Common myeloid progenitor, CD34-positive (primary cell): ENCODE measurements at regions of chr5 and their contacts with region 1.

Region 1: DNA sequence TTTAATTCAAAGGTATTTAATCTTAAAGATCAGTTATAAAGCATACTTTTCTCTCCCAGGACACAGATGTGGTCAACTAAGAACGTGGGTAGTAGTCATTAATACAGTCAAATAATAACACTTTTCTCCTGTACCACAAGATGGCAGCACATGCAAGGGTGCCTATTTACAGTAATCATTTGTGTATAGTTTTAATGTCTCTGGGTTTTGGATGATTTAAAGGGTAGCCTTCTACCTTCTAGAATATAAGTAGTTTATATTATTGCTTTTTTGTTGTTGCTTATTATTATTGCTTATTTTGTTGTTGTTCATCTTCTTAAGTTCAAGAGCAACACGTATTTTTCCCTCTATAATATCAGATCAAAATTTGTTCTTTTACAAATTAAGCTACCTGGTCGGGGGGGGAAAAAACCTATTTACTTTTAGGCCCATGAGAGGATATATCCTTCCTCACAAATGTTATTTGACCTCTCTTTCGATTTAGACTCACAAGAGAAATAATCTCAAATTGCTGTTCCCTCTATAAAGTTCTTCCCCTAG is 59.6 kb upstream of the SLC27A6 start:
- DNase-seq: peak; percentile 72 to 90 (median 83)
- H3K4me3 ChIP-seq: no peak overlapping the region
- H3K27ac ChIP-seq: no peak overlapping the region
- H3K4me1 ChIP-seq: no peaks in the 10 kb centered on the region
- H3K27me3 ChIP-seq: no peaks in the 10 kb centered on the region

Region 2: DNA sequence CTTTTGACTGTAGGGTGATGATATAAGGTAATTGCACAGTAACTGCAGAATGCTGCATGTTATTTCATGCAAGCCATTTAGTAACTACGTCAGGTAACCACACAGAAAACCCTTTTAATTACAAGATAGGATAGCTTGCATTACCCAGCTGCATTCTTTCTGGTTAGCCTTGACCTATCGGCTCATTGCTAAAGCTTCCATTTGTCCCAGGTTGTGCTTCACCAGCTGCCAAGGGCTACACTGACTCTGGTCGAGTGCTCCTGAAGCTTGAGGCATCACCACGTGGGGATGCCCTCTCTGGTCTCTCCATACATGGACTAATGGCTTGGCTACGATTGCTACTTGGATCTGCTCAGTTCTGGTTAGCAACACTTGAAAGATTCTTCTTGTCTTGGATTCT is 903.2 kb before region 1 on chr5:
- CTCF ChIA-PET with region 1: no interaction called
- POLR2A ChIA-PET with region 1: no interaction called
- DNase-seq: no peak
- H3K4me3 ChIP-seq: no peak overlapping the region
- H3K27ac ChIP-seq: no peak overlapping the region
- H3K4me1 ChIP-seq: no peaks in the 10 kb centered on the region
- H3K27me3 ChIP-seq: no peaks in the 10 kb centered on the region

Region 3: GRCh38 chr5:128426090-128426534 is 479.5 kb before region 1 on chr5:
- CTCF ChIA-PET with region 1: no interaction called
- POLR2A ChIA-PET with region 1: no interaction called
- DNase-seq: no peak
- H3K4me3 ChIP-seq: no peak overlapping the region
- H3K27ac ChIP-seq: no peak overlapping the region
- H3K4me1 ChIP-seq: no peaks in the 10 kb centered on the region
- H3K27me3 ChIP-seq: no peaks in the 10 kb centered on the region

Region 4: DNA sequence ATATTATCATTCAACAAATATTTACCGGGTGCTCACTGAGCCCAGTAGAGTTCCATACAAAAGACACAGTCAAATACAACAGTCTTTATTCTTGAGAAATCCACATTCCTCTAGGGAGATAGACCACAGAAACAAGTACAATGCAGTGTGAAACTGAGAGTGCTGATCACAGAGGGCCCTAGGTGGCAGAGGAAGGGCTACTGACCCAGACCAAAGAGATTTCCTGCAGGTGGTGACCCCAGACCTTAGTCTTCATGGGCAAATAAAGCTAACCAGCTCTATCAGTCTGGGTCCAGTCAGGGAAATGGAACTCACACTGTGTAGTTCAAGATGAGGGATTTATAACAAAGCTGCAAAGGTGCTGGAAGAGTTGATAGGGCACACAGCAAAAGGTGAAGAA is 50.7 kb before region 1 on chr5:
- CTCF ChIA-PET with region 1: no interaction called
- POLR2A ChIA-PET with region 1: no interaction called
- DNase-seq: no peak
- H3K4me3 ChIP-seq: no peak overlapping the region
- H3K27ac ChIP-seq: no peak overlapping the region
- H3K4me1 ChIP-seq: no peaks in the 10 kb centered on the region
- H3K27me3 ChIP-seq: peaks cover 0 to 3% (median 0%) of the 10 kb centered on the region in 5 experiments

Region 5: DNA sequence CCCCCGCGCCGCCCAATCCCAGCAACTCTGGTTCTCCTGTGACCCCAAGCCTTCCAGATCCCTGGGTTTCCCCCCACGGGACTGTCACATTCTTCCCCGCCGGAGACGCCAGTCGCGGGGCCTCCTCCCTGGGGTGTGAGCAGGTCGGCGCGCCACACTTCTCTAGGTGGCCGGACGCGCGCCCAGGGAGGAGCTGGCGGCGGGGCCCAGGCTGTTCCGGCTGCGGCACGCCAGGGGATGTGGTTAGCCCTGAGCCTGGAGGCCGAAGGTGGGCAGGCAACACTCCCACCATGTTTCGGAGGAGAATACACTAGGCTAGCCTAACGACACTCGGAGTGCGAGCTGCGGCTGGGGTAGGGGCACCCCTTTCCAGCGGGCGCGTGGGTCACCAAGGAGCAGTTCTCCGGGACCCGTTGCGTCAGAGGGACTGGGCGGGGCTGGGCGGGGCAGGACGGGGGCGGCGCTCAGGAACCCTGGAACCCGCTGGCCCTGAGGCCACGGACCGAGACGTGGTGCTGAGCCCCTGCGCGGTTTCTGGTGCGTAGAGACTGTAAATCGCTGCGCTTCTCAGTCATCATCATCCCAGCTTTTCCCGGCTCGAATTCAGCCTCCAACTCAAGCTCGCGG is 59.5 kb after region 1 on chr5 and contains the start of gene SLC27A6:
- CTCF ChIA-PET with region 1: interaction called, 14 read pairs
- POLR2A ChIA-PET with region 1: no interaction called
- DNase-seq: peak; percentile 54 to 91 (median 88)
- H3K4me3 ChIP-seq: peak within 1 kb of the TSS; percentile 21 to 72 (median 60)
- H3K27ac ChIP-seq: no peak within 1 kb of the TSS
- H3K4me1 ChIP-seq: peaks cover 0 to 14% (median 8%) of the 10 kb centered on the region in 4 experiments
- H3K27me3 ChIP-seq: peaks cover 0 to 6% (median 0%) of the 10 kb centered on the region in 5 experiments

Region 6: GRCh38 chr5:129053438-129053837 is 147.8 kb after region 1 on chr5:
- CTCF ChIA-PET with region 1: interaction called, 17 read pairs
- POLR2A ChIA-PET with region 1: no interaction called
- DNase-seq: peak; percentile 13 to 35 (median 28)
- H3K4me3 ChIP-seq: no peak overlapping the region
- H3K27ac ChIP-seq: no peak overlapping the region
- H3K4me1 ChIP-seq: no peaks in the 10 kb centered on the region
- H3K27me3 ChIP-seq: no peaks in the 10 kb centered on the region